ENCODE measurements at regions of chr2 and their contacts with region 1.

Region 1: GRCh38 chr2:235595422-235596010 is 101.7 kb downstream of the AGAP1 start:
- DNase-seq: peak; percentile 53 to 91 (median 75)
- H3K4me3 ChIP-seq: no peak overlapping the region
- H3K27ac ChIP-seq: no peak overlapping the region
- H3K4me1 ChIP-seq: no peaks in the 10 kb centered on the region
- H3K27me3 ChIP-seq: no peaks in the 10 kb centered on the region
- CTCF ChIP-seq: peak; percentile 67 to 92 (median 89)
- POLR2A ChIP-seq: no peak

Region 2: GRCh38 chr2:235026649-235027557 is 568.6 kb before region 1 on chr2:
- intact Hi-C with region 1: no loop called
- DNase-seq: peak; percentile 46 to 93 (median 87)
- H3K4me3 ChIP-seq: peak overlapping the region in 1 of 4 donors; percentile 45
- H3K27ac ChIP-seq: peak overlapping the region; percentile 56 to 87 (median 67)
- H3K4me1 ChIP-seq: peaks cover 15 to 20% of the 10 kb centered on the region in 2 donors
- H3K27me3 ChIP-seq: no peaks in the 10 kb centered on the region
- CTCF ChIP-seq: no peak
- POLR2A ChIP-seq: no peak

Region 3: DNA sequence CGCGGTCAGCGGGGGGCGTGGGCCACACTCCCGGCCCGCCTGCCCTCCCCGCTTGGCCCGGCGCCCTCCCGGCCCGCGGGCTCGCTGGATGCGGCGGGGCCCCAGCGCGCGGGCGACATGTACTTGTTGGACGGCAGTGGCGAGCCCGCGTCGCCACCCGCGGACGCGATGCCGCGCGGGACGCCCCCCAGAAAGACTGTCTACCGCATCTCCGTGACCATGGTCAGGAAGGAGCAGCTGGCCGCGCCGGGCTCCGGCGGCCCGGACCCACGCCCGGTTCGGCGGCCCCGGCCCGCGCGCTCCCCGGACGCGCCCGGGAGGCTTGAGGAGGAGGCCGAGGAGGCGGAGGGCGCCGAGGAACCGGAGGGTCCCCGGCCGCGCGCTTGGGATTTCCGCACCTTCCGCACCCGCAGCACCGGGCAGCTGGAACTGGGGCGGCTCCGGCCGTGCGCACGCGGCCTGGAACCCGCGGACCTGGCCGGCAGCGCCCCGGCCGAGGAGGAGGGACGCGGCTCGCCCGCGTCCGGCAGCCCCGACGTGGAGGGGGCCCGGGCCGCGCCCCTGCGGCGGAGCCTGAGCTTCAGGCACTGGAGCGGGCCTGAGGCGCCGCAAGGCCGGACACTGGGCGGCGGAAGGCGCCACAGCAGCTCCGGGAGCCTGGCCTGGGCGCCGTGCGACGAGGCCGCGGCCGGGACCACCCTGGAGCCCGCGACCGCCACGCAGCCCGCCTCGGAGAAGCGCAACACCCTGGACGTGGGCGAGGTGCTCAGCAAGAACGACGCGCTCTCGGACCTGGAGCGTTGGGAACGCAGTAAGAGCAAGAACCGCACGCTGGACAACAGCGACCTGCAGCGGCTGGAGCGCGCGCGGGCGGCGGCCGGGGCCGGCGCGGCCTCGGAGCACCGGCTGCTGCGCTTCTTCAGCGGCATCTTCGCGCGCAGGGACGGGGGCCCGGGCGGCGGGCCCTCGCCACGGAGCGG is 74.8 kb after region 1 on chr2:
- intact Hi-C with region 1: loop called (anchors 2 to 5 kb)
- DNase-seq: peak; percentile 55 to 81 (median 69)
- H3K4me3 ChIP-seq: peak overlapping the region in 1 of 4 donors; percentile 63
- H3K27ac ChIP-seq: no peak overlapping the region
- H3K4me1 ChIP-seq: peaks cover 4 to 16% of the 10 kb centered on the region in 2 donors
- H3K27me3 ChIP-seq: no peaks in the 10 kb centered on the region
- CTCF ChIP-seq: peak in 4 of 6 experiments; percentile 13 to 65 (median 62)
- POLR2A ChIP-seq: no peak

Region 4: DNA sequence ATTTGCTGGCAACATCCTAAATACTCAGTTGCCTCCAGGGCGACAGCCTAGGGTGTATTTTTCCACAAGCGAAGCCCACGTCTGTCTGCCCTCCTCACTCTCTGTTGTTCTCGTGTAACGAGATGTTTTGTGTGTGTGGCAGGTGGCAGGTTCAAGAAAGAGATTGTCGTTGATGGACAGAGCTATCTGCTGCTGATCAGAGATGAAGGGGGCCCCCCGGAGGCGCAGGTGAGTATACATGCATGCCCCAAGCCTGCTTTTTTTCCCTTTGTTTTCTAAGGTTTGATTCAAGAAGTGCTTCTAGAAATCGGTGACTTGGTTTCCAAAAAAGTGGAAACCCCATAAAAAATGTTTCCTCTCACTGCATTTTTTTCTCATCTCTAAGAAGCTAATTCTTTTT is 145.3 kb after region 1 on chr2:
- intact Hi-C with region 1: loop called (anchors 5 kb)
- DNase-seq: no peak
- H3K4me3 ChIP-seq: no peak overlapping the region
- H3K27ac ChIP-seq: no peak overlapping the region
- H3K4me1 ChIP-seq: no peaks in the 10 kb centered on the region
- H3K27me3 ChIP-seq: no peaks in the 10 kb centered on the region
- CTCF ChIP-seq: no peak
- POLR2A ChIP-seq: no peak

Region 5: GRCh38 chr2:235746257-235747084 is 151.0 kb after region 1 on chr2:
- intact Hi-C with region 1: loop called (anchors 5 kb)
- DNase-seq: peak; percentile 64 to 88 (median 75)
- H3K4me3 ChIP-seq: no peak overlapping the region
- H3K27ac ChIP-seq: no peak overlapping the region
- H3K4me1 ChIP-seq: no peaks in the 10 kb centered on the region
- H3K27me3 ChIP-seq: no peaks in the 10 kb centered on the region
- CTCF ChIP-seq: peak; percentile 65 to 93 (median 84)
- POLR2A ChIP-seq: no peak

Measured in adrenal gland (tissue), 19 donors.